CD4-positive, alpha-beta T cell (primary cell): ENCODE measurements at regions of chr1 and their contacts with region 1.

Region 1: GRCh38 chr1:181105134-181106021 is 16.9 kb downstream of the IER5 start:
- DNase-seq: peak; percentile 86 to 97 (median 94)
- ATAC-seq: peak; percentile 88
- H3K4me3 ChIP-seq: peak overlapping the region; percentile 80
- H3K4me3 Mint-ChIP-seq: peak overlapping the region; percentile 88
- H3K27ac ChIP-seq: peak overlapping the region; percentile 58 to 72
- H3K27ac Mint-ChIP-seq: peak overlapping the region; percentile 67
- H3K4me1 ChIP-seq: peaks cover 49% of the 10 kb centered on the region
- H3K4me1 Mint-ChIP-seq: peaks cover 60% of the 10 kb centered on the region
- H3K27me3 ChIP-seq: no peaks in the 10 kb centered on the region
- H3K27me3 Mint-ChIP-seq: no peaks in the 10 kb centered on the region
- CTCF ChIP-seq: peak; percentile 1

Region 2: GRCh38 chr1:180693565-180694244 is 411.7 kb before region 1 on chr1:
- CTCF ChIA-PET with region 1: no interaction called
- POLR2A ChIA-PET with region 1: no interaction called
- intact Hi-C with region 1: no loop called
- DNase-seq: no peak
- ATAC-seq: no peak
- H3K4me3 ChIP-seq: no peak overlapping the region
- H3K4me3 Mint-ChIP-seq: no peak overlapping the region
- H3K27ac ChIP-seq: no peak overlapping the region
- H3K27ac Mint-ChIP-seq: no peak overlapping the region
- H3K4me1 ChIP-seq: no peaks in the 10 kb centered on the region
- H3K4me1 Mint-ChIP-seq: peaks cover 31% of the 10 kb centered on the region
- H3K27me3 ChIP-seq: no peaks in the 10 kb centered on the region
- H3K27me3 Mint-ChIP-seq: no peaks in the 10 kb centered on the region
- CTCF ChIP-seq: no peak

Region 3: DNA sequence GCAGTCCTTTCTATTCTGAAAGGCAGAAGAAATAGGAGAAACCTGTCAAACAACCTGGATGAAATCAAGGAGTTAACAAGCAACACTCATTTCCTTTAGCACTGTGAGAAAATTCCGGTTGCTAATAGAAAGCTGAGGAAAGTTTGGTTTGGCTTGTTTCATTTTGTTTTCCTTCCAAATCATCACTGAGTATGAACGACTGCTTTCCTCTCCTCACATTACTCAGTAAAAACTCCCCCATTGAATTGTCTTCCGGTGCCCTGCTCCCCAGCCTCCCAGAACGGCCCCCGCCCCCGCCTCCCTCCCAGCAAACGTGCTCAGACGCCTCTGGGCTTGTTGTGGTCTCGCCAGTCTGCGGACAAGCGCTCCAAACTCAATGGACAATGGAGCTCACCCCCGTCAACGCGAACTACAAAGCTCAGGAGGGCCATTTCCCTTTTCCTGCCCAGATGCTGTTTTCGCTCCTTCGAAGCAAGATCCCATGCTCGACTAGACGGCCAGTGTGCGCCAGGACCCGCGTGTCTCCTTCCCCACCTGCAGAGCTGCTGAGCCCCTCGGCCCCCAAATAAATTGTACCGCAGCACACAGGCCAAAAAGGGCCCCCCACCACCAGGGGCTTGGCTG is 83.5 kb before region 1 on chr1:
- CTCF ChIA-PET with region 1: no interaction called
- POLR2A ChIA-PET with region 1: interaction called, 6 read pairs
- intact Hi-C with region 1: loop called in 1 of 2 experiments (anchors 5 kb)
- DNase-seq: peak in 13 of 14 experiments; percentile 22 to 80 (median 44)
- ATAC-seq: peak; percentile 40
- H3K4me3 ChIP-seq: peak overlapping the region; percentile 76
- H3K4me3 Mint-ChIP-seq: peak overlapping the region; percentile 99
- H3K27ac ChIP-seq: peak overlapping the region; percentile 53 to 83
- H3K27ac Mint-ChIP-seq: peak overlapping the region; percentile 98
- H3K4me1 ChIP-seq: peaks cover 26% of the 10 kb centered on the region
- H3K4me1 Mint-ChIP-seq: peaks cover 47% of the 10 kb centered on the region
- H3K27me3 ChIP-seq: no peaks in the 10 kb centered on the region
- H3K27me3 Mint-ChIP-seq: peaks cover 12% of the 10 kb centered on the region
- CTCF ChIP-seq: no peak

Region 4: GRCh38 chr1:181044449-181044966 is 60.9 kb before region 1 on chr1:
- CTCF ChIA-PET with region 1: no interaction called
- POLR2A ChIA-PET with region 1: no interaction called
- intact Hi-C with region 1: no loop called
- DNase-seq: peak in 6 of 14 experiments; percentile 15 to 76 (median 18)
- ATAC-seq: peak; percentile 82
- H3K4me3 ChIP-seq: no peak overlapping the region
- H3K4me3 Mint-ChIP-seq: no peak overlapping the region
- H3K27ac ChIP-seq: no peak overlapping the region
- H3K27ac Mint-ChIP-seq: peak overlapping the region; percentile 64
- H3K4me1 ChIP-seq: peaks cover 26% of the 10 kb centered on the region
- H3K4me1 Mint-ChIP-seq: peaks cover 38% of the 10 kb centered on the region
- H3K27me3 ChIP-seq: no peaks in the 10 kb centered on the region
- H3K27me3 Mint-ChIP-seq: no peaks in the 10 kb centered on the region
- CTCF ChIP-seq: no peak

Region 5: DNA sequence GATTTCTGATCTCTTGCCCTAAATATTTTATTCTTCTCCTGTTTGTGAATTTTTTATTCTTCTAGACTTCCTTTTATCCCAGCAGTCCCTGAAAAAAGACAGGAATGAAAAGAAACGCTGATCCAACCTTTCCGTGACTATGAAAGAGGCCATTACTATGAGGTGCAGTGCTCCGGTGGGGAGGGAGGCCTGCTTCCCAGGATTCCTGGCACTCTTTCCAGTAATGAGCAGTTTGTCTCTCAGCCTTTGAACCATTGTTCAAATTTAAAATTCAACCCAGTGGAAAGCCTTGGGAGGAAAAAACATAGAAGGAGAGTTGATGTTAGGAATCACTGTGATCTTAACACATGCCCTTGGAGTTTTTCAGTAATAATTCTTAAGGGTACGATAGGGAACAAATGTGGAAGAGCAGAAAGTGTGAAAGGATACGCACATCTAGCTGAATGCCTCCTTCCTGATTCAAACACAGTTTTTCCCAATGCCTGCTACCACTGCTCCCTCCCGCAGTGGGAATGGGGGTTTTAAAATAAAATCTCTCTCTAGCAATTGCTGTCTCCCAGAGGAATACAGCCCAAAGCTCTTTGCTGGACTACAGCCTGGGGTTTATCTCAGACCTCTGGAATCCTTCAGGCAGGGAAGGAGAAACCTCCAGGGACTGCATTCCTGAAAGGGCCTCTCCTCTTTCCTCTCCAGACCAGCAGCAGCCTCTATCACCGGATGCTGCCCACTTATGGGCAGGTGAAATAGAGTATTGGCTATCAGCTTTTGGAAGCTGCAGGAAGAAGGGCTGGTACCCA is 10.8 kb before region 1 on chr1:
- CTCF ChIA-PET with region 1: interaction called, 31 read pairs
- POLR2A ChIA-PET with region 1: interaction called, 231 read pairs
- intact Hi-C with region 1: loop called in 1 of 2 experiments (anchors 1 kb)
- DNase-seq: no peak
- ATAC-seq: no peak
- H3K4me3 ChIP-seq: no peak overlapping the region
- H3K4me3 Mint-ChIP-seq: no peak overlapping the region
- H3K27ac ChIP-seq: no peak overlapping the region
- H3K27ac Mint-ChIP-seq: no peak overlapping the region
- H3K4me1 ChIP-seq: peaks cover 16% of the 10 kb centered on the region
- H3K4me1 Mint-ChIP-seq: peaks cover 46% of the 10 kb centered on the region
- H3K27me3 ChIP-seq: no peaks in the 10 kb centered on the region
- H3K27me3 Mint-ChIP-seq: no peaks in the 10 kb centered on the region
- CTCF ChIP-seq: no peak

Region 6: GRCh38 chr1:181152892-181153633 is 47.7 kb after region 1 on chr1:
- CTCF ChIA-PET with region 1: interaction called, 3 read pairs
- POLR2A ChIA-PET with region 1: interaction called, 22 read pairs
- intact Hi-C with region 1: no loop called
- DNase-seq: peak in 2 of 14 experiments; percentile 35 to 44
- ATAC-seq: no peak
- H3K4me3 ChIP-seq: no peak overlapping the region
- H3K4me3 Mint-ChIP-seq: no peak overlapping the region
- H3K27ac ChIP-seq: no peak overlapping the region
- H3K27ac Mint-ChIP-seq: no peak overlapping the region
- H3K4me1 ChIP-seq: peaks cover 54% of the 10 kb centered on the region
- H3K4me1 Mint-ChIP-seq: peaks cover 63% of the 10 kb centered on the region
- H3K27me3 ChIP-seq: no peaks in the 10 kb centered on the region
- H3K27me3 Mint-ChIP-seq: no peaks in the 10 kb centered on the region
- CTCF ChIP-seq: no peak